GM10248 (cell line): ENCODE measurements at regions of chr1 and their contacts with region 1.

Region 1: GRCh38 chr1:35726450-35727433 is 8.1 kb upstream of the C1orf216 start:
- DNase-seq: peak; percentile 63
- CTCF ChIP-seq: peak; percentile 83

Region 2: DNA sequence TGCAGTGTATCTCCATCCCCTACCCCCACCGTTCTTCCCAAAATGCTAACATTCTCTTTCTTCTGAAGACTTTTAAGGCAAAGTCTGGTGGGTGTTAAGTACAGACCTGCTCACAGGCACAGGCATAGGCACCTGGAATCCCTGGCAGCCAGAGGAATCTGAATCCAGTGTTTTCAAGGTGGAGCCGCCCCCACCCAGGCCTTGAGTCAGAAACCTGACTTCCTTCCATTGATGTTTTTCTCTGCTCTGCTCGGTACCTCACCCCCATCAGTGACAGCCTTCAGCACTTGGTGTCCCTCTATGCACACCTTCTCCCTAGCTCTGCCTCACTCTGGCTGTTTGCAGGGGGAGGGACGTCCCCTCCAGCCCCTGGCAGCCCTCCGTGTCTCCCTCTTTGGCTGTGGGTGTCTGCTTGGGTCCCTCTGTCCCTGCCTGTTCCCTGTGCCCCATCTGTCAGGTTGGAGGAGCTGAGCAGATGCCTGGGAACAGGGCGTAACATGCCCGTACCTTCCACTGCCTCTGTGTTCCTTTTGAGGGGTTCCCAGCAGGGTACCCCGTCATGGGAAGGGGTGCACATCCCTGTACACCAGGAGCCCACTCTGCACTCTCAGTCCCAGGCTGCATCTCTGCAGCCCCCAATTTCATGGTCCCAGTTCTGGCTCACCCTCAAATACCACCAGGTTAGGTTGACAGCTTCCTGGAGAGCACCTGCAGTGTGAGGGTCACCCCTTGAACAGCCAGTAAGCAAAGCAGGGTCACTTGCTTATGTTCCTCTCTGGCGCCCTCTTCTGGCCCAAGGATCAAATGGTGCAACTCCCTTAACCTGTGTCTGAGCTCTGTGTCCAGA is 162.5 kb before region 1 on chr1:
- CTCF ChIA-PET with region 1: interaction called, 137 read pairs
- POLR2A ChIA-PET with region 1: no interaction called
- DNase-seq: peak; percentile 86
- CTCF ChIP-seq: peak; percentile 83

Region 3: DNA sequence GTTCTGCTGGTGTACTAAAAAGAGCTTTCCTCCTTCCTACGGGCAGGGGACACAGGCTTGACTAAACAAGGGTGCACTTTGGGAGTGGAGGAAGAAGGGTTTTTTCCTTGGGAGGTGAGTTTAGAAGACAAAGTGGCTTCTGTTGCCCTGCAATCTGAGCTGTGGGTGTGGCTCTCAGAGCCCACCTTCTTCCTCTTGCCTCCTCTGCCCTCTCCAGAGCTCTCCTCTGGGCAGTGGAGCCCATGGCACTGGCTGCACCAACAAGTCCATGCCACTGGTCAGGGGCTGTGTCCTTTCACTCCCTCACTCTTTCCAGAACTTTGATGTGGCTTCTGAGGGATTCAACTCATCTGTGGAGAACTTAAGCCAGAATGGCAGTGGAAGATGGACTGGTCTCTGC is 59.8 kb before region 1 on chr1:
- CTCF ChIA-PET with region 1: no interaction called
- POLR2A ChIA-PET with region 1: no interaction called
- DNase-seq: no peak
- CTCF ChIP-seq: no peak

Region 4: GRCh38 chr1:35737120-35737519 is 10.4 kb after region 1 on chr1:
- CTCF ChIA-PET with region 1: interaction called, 69 read pairs
- POLR2A ChIA-PET with region 1: no interaction called
- DNase-seq: no peak
- CTCF ChIP-seq: no peak

Region 5: DNA sequence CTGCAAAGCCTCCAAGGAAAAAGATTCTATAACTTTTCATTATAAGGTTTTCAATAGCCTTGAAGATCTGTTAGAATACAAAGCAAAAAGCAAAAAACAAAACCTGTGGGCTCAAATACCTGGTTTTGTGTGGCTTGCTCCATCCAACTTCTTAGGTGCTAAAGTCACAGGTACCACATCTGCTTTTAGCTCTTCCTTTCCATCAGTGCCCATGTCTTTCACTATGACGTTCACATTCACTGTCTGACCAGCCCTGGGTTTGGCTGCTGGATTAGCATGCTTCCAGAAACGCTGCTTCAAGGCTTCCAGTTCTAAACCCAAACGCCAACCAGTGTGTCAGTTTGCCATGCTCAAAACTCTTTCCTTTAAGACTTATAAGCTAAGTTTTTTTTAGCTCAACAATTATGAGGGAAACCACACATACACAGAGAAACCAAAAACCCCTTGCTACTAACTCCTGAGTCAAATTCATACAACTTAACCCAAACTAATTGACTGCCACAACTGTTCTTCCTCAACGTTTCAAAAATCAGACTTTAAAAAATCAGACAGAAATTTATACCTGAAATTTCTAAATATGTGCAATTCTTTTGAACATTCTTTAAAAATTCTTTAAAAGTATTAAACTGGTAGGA is 27.0 kb after region 1 on chr1:
- CTCF ChIA-PET with region 1: interaction called, 32 read pairs
- POLR2A ChIA-PET with region 1: no interaction called
- DNase-seq: no peak
- CTCF ChIP-seq: no peak

Region 6: GRCh38 chr1:35777109-35777508 is 50.4 kb after region 1 on chr1:
- CTCF ChIA-PET with region 1: interaction called, 19 read pairs
- POLR2A ChIA-PET with region 1: no interaction called
- DNase-seq: no peak
- CTCF ChIP-seq: no peak